BJ (cell line): ENCODE measurements at regions of chr12 and their contacts with region 1.

Region 1: GRCh38 chr12:31517994-31518393 is 72.9 kb downstream of the DENND5B start:
- DNase-seq: no peak
- H3K4me3 ChIP-seq: no peak overlapping the region
- H3K27me3 ChIP-seq: no peaks in the 10 kb centered on the region
- CTCF ChIP-seq: no peak

Region 2: DNA sequence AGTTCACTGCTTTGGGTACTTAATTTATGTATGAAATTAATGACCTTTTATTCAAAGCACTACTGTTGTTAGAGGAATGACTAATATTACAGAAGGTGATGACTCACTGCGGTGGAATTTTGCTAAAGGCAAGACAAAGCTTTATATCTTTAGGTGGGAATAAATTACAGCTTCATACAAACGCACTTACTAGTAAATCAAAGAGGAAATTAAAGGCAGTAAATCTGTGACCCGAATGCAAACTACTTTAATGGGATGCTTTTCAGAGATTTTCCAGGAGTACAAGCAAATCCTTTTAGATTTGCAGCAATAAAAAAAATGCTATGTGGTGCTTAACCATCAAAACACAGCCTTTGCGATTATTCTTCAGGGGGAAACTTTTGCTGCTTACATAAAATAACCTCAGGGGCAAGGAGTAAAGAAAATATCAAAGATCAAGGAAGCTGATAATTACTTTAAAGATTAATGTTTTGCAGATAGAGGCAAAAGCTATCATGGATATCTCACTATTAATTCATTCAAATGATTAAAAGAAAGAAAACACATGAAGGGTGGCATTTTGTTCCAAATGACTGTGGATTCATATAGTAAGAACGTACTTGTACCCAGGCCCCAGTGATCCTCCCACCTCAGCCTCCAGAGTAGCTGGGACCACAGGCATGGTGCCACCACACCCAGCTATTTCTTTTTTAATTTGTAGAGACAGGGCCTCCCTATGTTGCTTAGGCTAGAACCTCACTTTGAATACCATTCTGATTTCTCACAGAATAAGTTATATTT is 26.0 kb before region 1 on chr12:
- CTCF ChIA-PET with region 1: interaction called, 3 read pairs
- POLR2A ChIA-PET with region 1: interaction called, 10 read pairs
- DNase-seq: peak; percentile 86
- H3K4me3 ChIP-seq: no peak overlapping the region
- H3K27me3 ChIP-seq: no peaks in the 10 kb centered on the region
- CTCF ChIP-seq: no peak

Region 3: GRCh38 chr12:31498424-31498823 is 19.6 kb before region 1 on chr12:
- CTCF ChIA-PET with region 1: interaction called, 3 read pairs
- POLR2A ChIA-PET with region 1: interaction called, 15 read pairs
- DNase-seq: no peak
- H3K4me3 ChIP-seq: no peak overlapping the region
- H3K27me3 ChIP-seq: no peaks in the 10 kb centered on the region
- CTCF ChIP-seq: no peak

Region 4: DNA sequence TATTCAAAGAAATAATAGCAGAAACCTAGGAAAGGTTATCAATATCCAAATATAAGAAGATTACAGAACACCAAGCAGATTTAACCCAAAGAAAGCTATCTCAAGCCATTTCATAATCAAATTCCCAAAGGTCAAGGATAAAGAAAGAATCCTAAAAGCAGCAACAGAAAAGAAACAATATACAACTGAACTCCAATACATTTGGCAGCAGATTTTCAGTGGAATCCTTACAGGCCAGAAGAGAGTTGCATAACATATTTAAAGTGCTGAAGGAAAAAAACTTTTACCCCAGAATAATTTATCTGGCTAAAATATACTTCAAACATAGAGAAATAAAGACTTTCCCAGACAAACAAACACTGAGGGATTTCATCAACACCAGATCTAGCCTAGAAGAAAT is 18.7 kb after region 1 on chr12:
- CTCF ChIA-PET with region 1: no interaction called
- POLR2A ChIA-PET with region 1: no interaction called
- DNase-seq: no peak
- H3K4me3 ChIP-seq: no peak overlapping the region
- H3K27me3 ChIP-seq: no peaks in the 10 kb centered on the region
- CTCF ChIP-seq: no peak

Region 5: DNA sequence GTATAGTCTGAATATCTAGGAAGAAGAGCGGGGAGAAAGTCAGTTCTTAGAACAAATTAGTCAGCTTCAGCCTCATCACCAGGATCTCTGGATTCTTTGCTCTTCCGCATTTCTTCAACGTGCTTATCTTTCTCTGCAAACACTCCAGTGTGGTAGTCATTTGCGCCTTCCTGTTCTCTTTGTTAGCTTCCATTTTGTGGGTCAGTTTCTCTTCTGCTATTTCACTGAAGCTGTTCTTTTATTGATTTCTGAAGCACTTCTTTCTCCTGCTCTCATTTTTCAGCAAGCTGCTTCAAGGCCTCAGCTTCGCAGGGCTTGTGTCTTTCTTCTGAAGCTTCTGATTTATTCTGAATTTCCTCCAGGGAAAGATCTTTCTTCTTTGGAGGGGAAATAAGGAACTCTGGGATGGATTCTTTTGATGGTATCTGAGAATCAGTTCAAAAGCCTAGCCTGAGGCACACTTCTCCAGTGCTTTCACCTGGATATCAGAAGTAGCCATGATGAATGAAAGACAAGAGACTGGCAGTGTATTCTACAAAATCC is 197.4 kb after region 1 on chr12:
- CTCF ChIA-PET with region 1: no interaction called
- POLR2A ChIA-PET with region 1: no interaction called
- DNase-seq: no peak
- H3K4me3 ChIP-seq: no peak overlapping the region
- H3K27me3 ChIP-seq: no peaks in the 10 kb centered on the region
- CTCF ChIP-seq: no peak